Prostate gland (tissue), 2 donors: ENCODE measurements at regions of chr1 and their contacts with region 1.

Region 1: GRCh38 chr1:115364046-115364775 is 26.2 kb upstream of the NGF start:
- DNase-seq: no peak
- H3K4me3 ChIP-seq: no peak overlapping the region
- H3K27ac ChIP-seq: no peak overlapping the region
- H3K4me1 ChIP-seq: no peaks in the 10 kb centered on the region
- H3K27me3 ChIP-seq: no peaks in the 10 kb centered on the region
- CTCF ChIP-seq: no peak
- POLR2A ChIP-seq: no peak

Region 2: DNA sequence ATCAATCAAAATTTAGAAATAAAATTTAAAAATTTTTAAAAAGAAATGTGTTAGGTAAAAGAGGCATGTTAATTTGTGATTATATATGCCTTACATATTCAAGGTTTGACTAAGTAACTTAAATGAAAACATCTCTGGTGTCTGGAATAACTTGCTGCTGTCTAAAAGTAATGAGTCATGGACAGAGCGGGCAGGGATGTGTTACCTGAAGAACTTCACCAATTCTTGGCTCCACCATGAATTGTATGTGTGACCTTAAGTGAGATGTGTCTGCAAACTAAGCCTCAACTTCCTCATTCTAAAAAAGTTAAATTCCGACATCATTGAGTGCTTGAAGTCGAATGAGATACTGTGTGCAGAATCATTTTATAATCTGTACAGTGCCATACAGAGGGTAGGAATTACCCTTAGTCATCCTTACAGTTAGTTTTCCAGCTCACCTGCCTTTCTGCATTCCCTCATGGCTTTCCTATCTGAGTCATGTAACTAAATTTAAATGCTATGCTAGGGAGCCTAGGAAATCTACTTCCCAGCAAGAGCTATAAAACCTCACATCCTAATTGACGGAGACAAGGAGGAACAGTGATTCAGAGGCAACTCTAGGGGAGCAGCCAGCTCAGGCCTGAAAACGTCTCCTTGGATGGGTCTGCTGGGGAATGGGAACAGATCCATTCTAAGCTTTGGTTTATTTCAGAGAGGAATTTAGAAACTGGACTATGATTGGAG is 174.2 kb before region 1 on chr1:
- intact Hi-C with region 1: loop called (anchors 10 kb)
- DNase-seq: no peak
- H3K4me3 ChIP-seq: no peak overlapping the region
- H3K27ac ChIP-seq: no peak overlapping the region
- H3K4me1 ChIP-seq: no peaks in the 10 kb centered on the region
- H3K27me3 ChIP-seq: no peaks in the 10 kb centered on the region
- CTCF ChIP-seq: no peak
- POLR2A ChIP-seq: no peak

Region 3: DNA sequence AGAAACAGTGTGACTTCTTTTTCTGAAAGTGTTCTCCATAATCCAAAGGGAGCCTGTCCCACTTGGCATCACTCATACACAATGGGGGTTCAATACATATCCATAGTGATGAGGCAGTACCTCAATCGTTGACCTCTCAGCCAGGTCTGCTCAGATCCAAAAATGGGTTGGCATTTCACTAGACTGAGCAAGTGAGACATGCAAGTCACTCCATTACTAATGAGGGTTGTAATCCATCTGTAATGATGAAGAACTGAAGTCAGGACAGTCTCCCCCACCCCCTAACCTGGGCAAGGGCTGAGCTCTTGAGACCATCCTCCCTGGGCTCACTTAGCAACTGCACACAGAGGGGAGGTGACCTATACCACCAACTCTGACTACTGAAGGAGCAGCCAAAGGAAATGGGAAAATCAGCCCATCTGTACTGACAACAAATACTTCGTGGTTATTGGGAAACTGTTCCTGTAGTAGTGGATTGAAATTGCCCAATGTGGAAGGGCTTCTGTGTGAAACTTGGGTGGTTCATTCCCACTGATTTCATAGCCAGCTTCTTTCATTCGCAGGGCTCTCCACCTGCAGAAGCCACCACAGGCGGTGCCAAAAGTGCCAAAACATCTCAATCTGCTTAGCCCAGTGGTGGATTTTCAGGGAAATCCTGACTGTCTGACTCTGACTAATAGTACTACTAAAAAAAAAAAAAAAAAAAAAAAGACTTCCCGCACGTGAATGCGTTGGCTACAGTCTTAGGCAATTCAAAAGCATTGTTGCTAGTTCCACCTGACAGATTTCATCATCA is 31.2 kb before region 1 on chr1:
- intact Hi-C with region 1: no loop called
- DNase-seq: no peak
- H3K4me3 ChIP-seq: no peak overlapping the region
- H3K27ac ChIP-seq: no peak overlapping the region
- H3K4me1 ChIP-seq: no peaks in the 10 kb centered on the region
- H3K27me3 ChIP-seq: peaks cover 5% of the 10 kb centered on the region
- CTCF ChIP-seq: no peak
- POLR2A ChIP-seq: no peak